GM12878 (cell line): ENCODE measurements at regions of chr10 and their contacts with region 1.

Region 1: DNA sequence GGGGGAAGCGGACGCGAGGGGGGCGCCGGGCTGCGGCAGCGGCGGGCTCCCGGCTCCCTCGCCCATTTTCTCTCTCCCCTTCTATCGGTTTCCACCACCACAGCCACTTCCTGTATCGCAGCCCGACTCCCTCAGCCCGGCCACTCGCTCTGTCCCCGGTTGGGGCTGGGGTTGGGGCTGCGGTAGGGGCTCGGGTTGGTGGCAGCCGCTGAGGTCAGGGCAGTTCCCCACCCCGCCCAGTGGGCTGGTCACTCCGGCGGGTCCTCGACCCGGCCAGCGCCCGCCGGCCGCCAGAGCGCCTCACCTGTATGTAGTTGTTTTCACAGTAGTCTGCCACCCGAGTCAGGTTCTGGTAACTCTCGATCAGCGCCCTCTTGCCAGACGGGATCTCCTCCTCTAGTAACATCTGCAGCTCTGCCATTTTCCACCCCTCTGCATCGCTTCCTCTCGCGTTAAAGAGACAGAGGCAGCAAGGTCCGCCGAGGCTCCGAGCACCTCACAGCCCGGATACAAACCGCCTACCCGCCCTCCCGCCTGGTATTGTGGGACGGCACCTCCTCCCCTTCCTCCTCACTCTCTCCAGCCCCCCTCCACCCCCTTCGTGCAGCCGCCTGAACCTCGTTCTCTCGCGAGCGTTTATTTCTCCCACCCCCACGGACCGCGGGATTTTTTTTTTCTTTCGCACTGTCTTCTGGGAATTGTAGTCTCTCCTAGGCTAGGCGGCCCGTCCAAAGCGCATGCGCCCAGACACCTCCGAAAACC is at the start of gene ABI1:
- DNase-seq: peak; percentile 98
- ATAC-seq: peak; percentile 86
- H3K4me3 ChIP-seq: peak within 1 kb of the TSS; percentile 91
- H3K27ac ChIP-seq: peak within 1 kb of the TSS; percentile 92
- H3K4me1 ChIP-seq: peaks cover 4% of the 10 kb centered on the region; the same call in 1 of the 2 replicates
- H3K27me3 ChIP-seq: no peaks in the 10 kb centered on the region
- CTCF ChIP-seq: no peak
- EP300 ChIP-seq: peak in 1 of 2 experiments; percentile 3; a peak in 1 of 4 replicates
- POLR2A ChIP-seq: peak; percentile 93
- RAD21 ChIP-seq: no peak
- polyA plus RNA-seq, gene ABI1: 48.7 to 50.3 TPM

Region 2: GRCh38 chr10:26737730-26738129 is 122.9 kb before region 1 on chr10:
- CTCF ChIA-PET with region 1: interaction called, 6 read pairs
- POLR2A ChIA-PET with region 1: interaction called, 10 read pairs
- RAD21 ChIA-PET with region 1: interaction called, 11 read pairs
- SMC1A ChIA-PET with region 1: interaction called, 11 read pairs
- in situ Hi-C with region 1: loop called (anchors 10 kb)
- intact Hi-C with region 1: loop called (anchors 1 kb)
- DNase-seq: peak; percentile 95
- ATAC-seq: peak; percentile 90
- H3K4me3 ChIP-seq: no peak overlapping the region
- H3K27ac ChIP-seq: peak overlapping the region; percentile 92
- H3K4me1 ChIP-seq: peaks cover 62% of the 10 kb centered on the region
- H3K27me3 ChIP-seq: no peaks in the 10 kb centered on the region
- CTCF ChIP-seq: no peak
- EP300 ChIP-seq: peak; percentile 11 to 85; a peak in 3 of 4 replicates
- POLR2A ChIP-seq: peak; percentile 76
- RAD21 ChIP-seq: peak; percentile 24; the same call in 1 of the 2 replicates

Region 3: DNA sequence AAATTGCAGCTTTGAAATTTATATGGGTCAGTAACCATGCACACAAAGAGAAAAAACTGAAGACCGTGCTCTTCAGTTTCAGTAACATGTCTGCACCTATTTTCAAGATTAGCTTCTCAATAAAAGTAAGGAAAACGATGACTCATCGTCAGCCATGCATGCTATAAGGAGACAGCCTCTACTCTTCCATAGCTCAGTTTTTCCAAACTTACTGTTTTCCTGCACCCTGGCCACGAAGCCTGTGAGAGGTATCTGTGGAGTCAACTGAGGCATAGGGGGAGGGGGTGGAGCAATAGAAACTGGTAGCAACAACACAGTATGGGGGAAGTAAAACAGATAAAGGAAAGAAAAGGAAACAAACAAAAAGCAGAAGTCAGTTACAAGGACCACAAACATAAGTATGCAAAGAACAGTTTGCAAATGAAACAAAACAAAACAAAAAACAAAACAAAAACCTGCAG is 105.2 kb before region 1 on chr10:
- CTCF ChIA-PET with region 1: interaction called, 6 read pairs
- POLR2A ChIA-PET with region 1: interaction called, 5 read pairs
- RAD21 ChIA-PET with region 1: interaction called, 7 read pairs
- SMC1A ChIA-PET with region 1: interaction called, 20 read pairs
- in situ Hi-C with region 1: no loop called
- intact Hi-C with region 1: loop called (anchors 5 kb)
- DNase-seq: peak; percentile 67
- ATAC-seq: peak; percentile 98
- H3K4me3 ChIP-seq: peak overlapping the region; percentile 55; the same call in 1 of the 2 replicates
- H3K27ac ChIP-seq: peak overlapping the region; percentile 49
- H3K4me1 ChIP-seq: peaks cover 9% of the 10 kb centered on the region; the same call in 1 of the 2 replicates
- H3K27me3 ChIP-seq: no peaks in the 10 kb centered on the region
- CTCF ChIP-seq: no peak
- EP300 ChIP-seq: peak in 1 of 2 experiments; percentile 22; a peak in 1 of 4 replicates
- POLR2A ChIP-seq: no peak
- RAD21 ChIP-seq: no peak

Region 4: GRCh38 chr10:26839966-26840627 is 20.5 kb before region 1 on chr10:
- CTCF ChIA-PET with region 1: interaction called, 3 read pairs
- POLR2A ChIA-PET with region 1: interaction called, 5 read pairs
- RAD21 ChIA-PET with region 1: interaction called, 8 read pairs
- SMC1A ChIA-PET with region 1: interaction called, 16 read pairs
- in situ Hi-C with region 1: no loop called
- intact Hi-C with region 1: no loop called
- DNase-seq: no peak
- ATAC-seq: no peak
- H3K4me3 ChIP-seq: no peak overlapping the region
- H3K27ac ChIP-seq: no peak overlapping the region
- H3K4me1 ChIP-seq: peaks cover 14% of the 10 kb centered on the region
- H3K27me3 ChIP-seq: no peaks in the 10 kb centered on the region
- CTCF ChIP-seq: no peak
- EP300 ChIP-seq: no peak
- POLR2A ChIP-seq: no peak
- RAD21 ChIP-seq: no peak

Region 5: GRCh38 chr10:27155066-27155754 is 294.6 kb after region 1 on chr10 and contains the start of gene MASTL:
- CTCF ChIA-PET with region 1: interaction called, 10 read pairs
- POLR2A ChIA-PET with region 1: no interaction called
- RAD21 ChIA-PET with region 1: interaction called, 3 read pairs
- SMC1A ChIA-PET with region 1: interaction called, 3 read pairs
- in situ Hi-C with region 1: no loop called
- intact Hi-C with region 1: no loop called
- DNase-seq: peak; percentile 69
- ATAC-seq: peak; percentile 86
- H3K4me3 ChIP-seq: peak within 1 kb of the TSS; percentile 87
- H3K27ac ChIP-seq: peak within 1 kb of the TSS; percentile 100
- H3K4me1 ChIP-seq: no peaks in the 10 kb centered on the region; the same call in 1 of the 2 replicates
- H3K27me3 ChIP-seq: no peaks in the 10 kb centered on the region
- CTCF ChIP-seq: no peak
- EP300 ChIP-seq: no peak
- POLR2A ChIP-seq: peak; percentile 96
- RAD21 ChIP-seq: no peak
- polyA plus RNA-seq, gene MASTL: 7.1 to 9.7 TPM

Region 6: GRCh38 chr10:27857616-27858015 is 997.0 kb after region 1 on chr10:
- CTCF ChIA-PET with region 1: no interaction called
- POLR2A ChIA-PET with region 1: no interaction called
- RAD21 ChIA-PET with region 1: no interaction called
- SMC1A ChIA-PET with region 1: no interaction called
- in situ Hi-C with region 1: no loop called
- intact Hi-C with region 1: no loop called
- DNase-seq: no peak
- ATAC-seq: no peak
- H3K4me3 ChIP-seq: no peak overlapping the region
- H3K27ac ChIP-seq: no peak overlapping the region
- H3K4me1 ChIP-seq: no peaks in the 10 kb centered on the region
- H3K27me3 ChIP-seq: no peaks in the 10 kb centered on the region
- CTCF ChIP-seq: no peak
- EP300 ChIP-seq: no peak
- POLR2A ChIP-seq: no peak
- RAD21 ChIP-seq: no peak